Psoas muscle (tissue), 8 donors: ENCODE measurements at regions of chr3 and their contacts with region 1.

Region 1: DNA sequence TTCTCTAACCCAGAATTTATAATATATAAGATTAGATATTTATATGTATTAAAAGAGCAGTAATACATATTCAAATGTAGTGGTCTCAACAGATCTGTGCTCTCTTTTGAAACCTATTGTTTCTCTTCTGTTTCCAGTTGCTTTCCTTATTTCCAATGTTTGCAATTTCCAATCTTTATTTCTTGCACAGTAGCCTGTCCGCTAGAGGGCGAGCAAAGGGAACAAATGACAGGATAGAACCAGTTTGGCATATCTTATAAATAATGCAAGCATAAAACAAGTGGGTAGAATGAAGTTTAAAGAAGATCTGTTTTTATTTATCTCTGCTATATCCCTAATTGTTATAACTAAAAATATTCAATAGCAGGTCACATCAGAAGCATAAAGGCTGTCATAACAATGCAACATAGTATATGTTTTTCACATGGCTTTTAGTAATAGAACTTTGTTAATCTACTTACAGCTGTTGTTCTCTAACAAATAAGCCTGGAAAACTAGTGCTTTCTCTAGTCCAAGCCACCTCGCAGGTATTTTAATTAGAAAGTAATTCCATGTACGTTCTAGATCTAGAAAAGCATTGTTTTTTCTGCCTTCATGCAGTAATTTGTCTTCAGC is 15.1 kb upstream of the TCAIM start:
- DNase-seq: peak; percentile 42 to 64
- ATAC-seq: peak in 3 of 4 donors; percentile 44 to 84 (median 72)
- H3K4me3 ChIP-seq: no peak overlapping the region
- H3K27ac ChIP-seq: no peak overlapping the region
- H3K4me1 ChIP-seq: no peaks in the 10 kb centered on the region
- H3K27me3 ChIP-seq: no peaks in the 10 kb centered on the region
- CTCF ChIP-seq: peak; percentile 86

Region 2: DNA sequence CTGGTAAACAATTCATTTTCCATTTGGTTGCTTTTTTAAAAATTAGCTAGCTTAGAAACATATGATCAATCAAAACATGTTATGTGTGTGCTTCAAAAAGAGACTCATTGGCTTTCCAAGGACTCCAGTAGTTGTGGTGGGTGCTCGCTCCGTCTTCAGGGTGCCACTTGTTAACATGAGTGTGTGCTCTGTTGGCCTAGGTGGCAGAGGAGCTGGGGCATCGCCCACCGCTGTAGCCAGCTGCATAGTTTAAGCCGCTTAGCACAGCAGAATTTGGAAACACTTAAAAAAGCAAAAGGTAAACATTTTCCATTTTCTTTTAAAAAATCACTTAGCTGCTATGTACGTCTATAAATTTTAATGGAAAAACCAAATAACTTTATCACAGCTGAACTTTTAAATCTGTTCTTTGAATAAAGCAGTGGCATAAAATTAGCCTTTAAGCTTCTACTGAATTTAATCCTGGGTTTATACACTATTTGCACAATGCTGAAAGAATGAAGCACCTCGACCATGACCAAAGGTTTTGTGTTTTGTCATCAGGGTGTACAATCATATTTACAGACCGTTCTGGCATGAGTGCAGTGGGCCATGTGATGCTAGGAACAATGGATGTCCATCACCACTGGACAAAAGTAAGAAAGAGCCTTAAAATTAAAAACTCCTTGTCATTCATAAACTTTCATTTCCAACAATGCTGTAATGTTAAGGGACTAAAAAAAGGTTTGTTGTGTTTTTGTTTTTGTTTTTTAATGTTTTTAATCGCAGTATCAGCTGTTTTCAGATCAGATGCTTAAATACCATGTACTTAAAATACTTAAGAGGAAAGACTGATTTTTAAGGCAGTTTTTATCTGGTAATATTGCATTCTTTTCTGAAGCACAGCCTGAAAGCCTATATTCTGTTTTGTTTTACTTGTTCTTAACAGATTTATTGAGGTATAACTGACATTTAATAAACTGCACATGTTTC is 73.0 kb after region 1 on chr3:
- intact Hi-C with region 1: loop called in 1 of 2 experiments (anchors 10 kb)
- DNase-seq: no peak
- ATAC-seq: no peak
- H3K4me3 ChIP-seq: no peak overlapping the region
- H3K27ac ChIP-seq: no peak overlapping the region
- H3K4me1 ChIP-seq: no peaks in the 10 kb centered on the region
- H3K27me3 ChIP-seq: no peaks in the 10 kb centered on the region
- CTCF ChIP-seq: no peak

Region 3: DNA sequence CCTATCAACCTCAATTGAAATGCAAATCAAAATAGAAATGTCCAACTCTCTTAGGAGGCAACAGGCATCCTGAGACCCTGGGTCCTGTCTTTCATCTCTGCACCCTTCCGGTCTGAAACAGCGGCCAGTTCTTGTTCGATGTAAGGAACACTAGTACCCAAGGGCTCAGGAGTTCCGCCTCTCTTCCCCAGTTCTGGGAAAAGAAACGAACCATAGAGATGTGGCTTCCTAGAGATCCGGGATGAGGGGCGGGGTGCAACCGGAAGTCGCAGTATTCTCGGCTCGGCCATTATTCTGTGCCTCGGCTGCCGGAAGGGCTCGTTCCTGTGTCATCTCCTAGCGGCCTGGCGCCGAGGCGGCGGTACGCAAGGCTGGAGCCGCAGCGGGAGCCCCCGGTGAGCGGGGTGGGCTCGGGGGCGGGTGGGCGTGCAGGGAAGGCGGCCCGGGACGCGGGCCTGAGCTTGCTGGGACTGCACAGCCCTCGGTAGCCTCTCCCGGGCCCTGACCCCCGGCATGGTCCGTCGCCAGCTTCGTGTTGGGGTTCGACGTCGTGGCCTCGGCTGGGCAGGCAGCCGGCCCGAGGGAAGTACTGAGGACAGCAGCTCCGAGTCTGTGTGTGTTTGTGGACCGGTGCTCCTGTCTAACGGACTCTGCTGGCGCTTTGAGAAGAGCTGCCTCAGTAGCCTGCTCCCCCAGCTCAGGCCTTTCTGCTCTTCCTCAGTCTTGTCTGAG is 301.5 kb after region 1 on chr3 and contains the start of gene ZNF197:
- intact Hi-C with region 1: loop called in 1 of 2 experiments (anchors 5 kb)
- DNase-seq: peak; percentile 86 to 92
- ATAC-seq: peak; percentile 95 to 99 (median 98)
- H3K4me3 ChIP-seq: peak within 1 kb of the TSS; percentile 97
- H3K27ac ChIP-seq: peak within 1 kb of the TSS; percentile 96
- H3K4me1 ChIP-seq: peaks cover 13% of the 10 kb centered on the region
- H3K27me3 ChIP-seq: no peaks in the 10 kb centered on the region
- CTCF ChIP-seq: peak; percentile 9
- total RNA-seq, gene ZNF197: 15.1 to 19.1 (median 15.9) TPM

Region 4: DNA sequence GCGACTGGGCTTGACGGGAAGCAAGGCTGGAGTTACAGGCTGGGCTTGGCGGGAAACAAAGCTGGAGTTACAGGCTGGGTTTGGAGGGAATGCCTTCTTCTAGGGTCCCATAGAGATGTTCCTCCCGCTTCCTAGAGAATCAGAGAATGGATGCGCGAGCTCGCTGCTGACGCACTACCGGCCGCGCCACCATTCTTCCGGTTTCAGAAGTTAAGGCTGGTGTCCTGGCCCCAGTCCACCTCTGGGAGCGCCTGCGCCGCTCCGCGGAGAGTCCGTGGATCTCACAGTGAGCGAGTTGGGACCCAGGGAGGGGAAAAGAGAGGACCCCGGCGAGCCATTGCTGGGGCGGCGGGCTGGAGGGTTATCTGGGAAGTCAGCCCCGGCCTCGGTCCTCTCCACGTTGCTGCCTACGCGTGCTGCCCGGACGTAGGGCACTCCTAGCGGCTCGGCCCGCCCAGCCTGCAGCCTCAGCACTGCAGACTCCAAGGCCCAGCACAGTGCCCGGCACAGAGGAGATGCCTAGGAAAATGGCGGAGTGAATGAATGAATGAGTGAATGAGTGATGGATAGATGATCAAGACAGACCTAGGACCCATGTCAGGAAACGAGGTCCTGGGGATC is 389.1 kb after region 1 on chr3 and contains the start of gene ZNF502:
- intact Hi-C with region 1: loop called in 1 of 2 experiments (anchors 10 kb)
- DNase-seq: peak; percentile 91 to 94
- ATAC-seq: peak; percentile 92 to 100 (median 98)
- H3K4me3 ChIP-seq: peak within 1 kb of the TSS; percentile 92
- H3K27ac ChIP-seq: peak within 1 kb of the TSS; percentile 80
- H3K4me1 ChIP-seq: no peaks in the 10 kb centered on the region
- H3K27me3 ChIP-seq: peaks cover 0 to 6% (median 0%) of the 10 kb centered on the region in 3 donors
- CTCF ChIP-seq: peak; percentile 36
- total RNA-seq, gene ZNF502: 3.2 to 4.0 (median 3.7) TPM

Region 5: GRCh38 chr3:44913868-44914468 is 590.5 kb after region 1 on chr3:
- intact Hi-C with region 1: loop called in 1 of 2 experiments (anchors 10 kb)
- DNase-seq: peak; percentile 52 to 72
- ATAC-seq: peak; percentile 63 to 83 (median 75)
- H3K4me3 ChIP-seq: no peak overlapping the region
- H3K27ac ChIP-seq: no peak overlapping the region
- H3K4me1 ChIP-seq: no peaks in the 10 kb centered on the region
- H3K27me3 ChIP-seq: no peaks in the 10 kb centered on the region
- CTCF ChIP-seq: peak; percentile 71